Esophagus muscularis mucosa (tissue), 4 donors: ENCODE measurements at regions of chr6 and their contacts with region 1.

Region 1: GRCh38 chr6:56246881-56247653 is at the start of gene COL21A1:
- DNase-seq: no peak
- H3K4me3 ChIP-seq: peak within 1 kb of the TSS; percentile 61 to 72 (median 66)
- H3K27ac ChIP-seq: peak within 1 kb of the TSS; percentile 59 to 82 (median 79)
- H3K4me1 ChIP-seq: peaks cover 4 to 62% (median 50%) of the 10 kb centered on the region in 4 donors
- H3K27me3 ChIP-seq: no peaks in the 10 kb centered on the region
- CTCF ChIP-seq: peak; percentile 24 to 44 (median 30)
- EP300 ChIP-seq: no peak
- POLR2A ChIP-seq: no peak
- total RNA-seq, gene COL21A1: 8.3 to 22.2 (median 9.0) TPM

Region 2: GRCh38 chr6:56040223-56040622 is 206.8 kb before region 1 on chr6:
- intact Hi-C with region 1: no loop called
- DNase-seq: no peak
- H3K4me3 ChIP-seq: no peak overlapping the region
- H3K27ac ChIP-seq: no peak overlapping the region
- H3K4me1 ChIP-seq: peaks cover 0 to 12% (median 0%) of the 10 kb centered on the region in 4 donors
- H3K27me3 ChIP-seq: no peaks in the 10 kb centered on the region
- CTCF ChIP-seq: no peak
- EP300 ChIP-seq: no peak
- POLR2A ChIP-seq: no peak

Region 3: GRCh38 chr6:56131435-56131834 is 115.6 kb before region 1 on chr6:
- intact Hi-C with region 1: loop called (anchors 10 kb)
- DNase-seq: no peak
- H3K4me3 ChIP-seq: no peak overlapping the region
- H3K27ac ChIP-seq: no peak overlapping the region
- H3K4me1 ChIP-seq: no peaks in the 10 kb centered on the region
- H3K27me3 ChIP-seq: no peaks in the 10 kb centered on the region
- CTCF ChIP-seq: no peak
- EP300 ChIP-seq: no peak
- POLR2A ChIP-seq: no peak

Region 4: DNA sequence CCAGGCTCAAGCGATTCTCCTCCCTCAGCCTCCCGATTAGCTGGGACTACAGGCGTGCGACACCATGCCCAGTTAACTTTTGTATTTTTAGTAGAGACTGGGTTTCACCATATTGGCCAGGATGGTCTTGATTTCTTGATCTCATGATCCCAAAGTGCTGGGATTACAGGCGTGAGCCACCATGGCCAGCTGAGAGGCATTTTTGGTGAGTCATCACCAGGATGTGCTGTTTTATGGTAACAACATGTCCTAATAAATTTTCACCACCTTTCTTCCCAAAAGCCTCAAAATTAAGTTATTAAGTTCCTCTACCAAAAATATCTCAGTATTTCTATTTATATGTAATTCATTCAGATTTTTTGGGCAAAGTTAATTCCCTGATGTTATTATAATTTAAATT is 53.2 kb before region 1 on chr6:
- intact Hi-C with region 1: no loop called
- DNase-seq: no peak
- H3K4me3 ChIP-seq: no peak overlapping the region
- H3K27ac ChIP-seq: no peak overlapping the region
- H3K4me1 ChIP-seq: no peaks in the 10 kb centered on the region
- H3K27me3 ChIP-seq: no peaks in the 10 kb centered on the region
- CTCF ChIP-seq: no peak
- EP300 ChIP-seq: no peak
- POLR2A ChIP-seq: no peak